Adrenal gland (tissue), 19 donors: ENCODE measurements at regions of chr20 and their contacts with region 1.

Region 1: DNA sequence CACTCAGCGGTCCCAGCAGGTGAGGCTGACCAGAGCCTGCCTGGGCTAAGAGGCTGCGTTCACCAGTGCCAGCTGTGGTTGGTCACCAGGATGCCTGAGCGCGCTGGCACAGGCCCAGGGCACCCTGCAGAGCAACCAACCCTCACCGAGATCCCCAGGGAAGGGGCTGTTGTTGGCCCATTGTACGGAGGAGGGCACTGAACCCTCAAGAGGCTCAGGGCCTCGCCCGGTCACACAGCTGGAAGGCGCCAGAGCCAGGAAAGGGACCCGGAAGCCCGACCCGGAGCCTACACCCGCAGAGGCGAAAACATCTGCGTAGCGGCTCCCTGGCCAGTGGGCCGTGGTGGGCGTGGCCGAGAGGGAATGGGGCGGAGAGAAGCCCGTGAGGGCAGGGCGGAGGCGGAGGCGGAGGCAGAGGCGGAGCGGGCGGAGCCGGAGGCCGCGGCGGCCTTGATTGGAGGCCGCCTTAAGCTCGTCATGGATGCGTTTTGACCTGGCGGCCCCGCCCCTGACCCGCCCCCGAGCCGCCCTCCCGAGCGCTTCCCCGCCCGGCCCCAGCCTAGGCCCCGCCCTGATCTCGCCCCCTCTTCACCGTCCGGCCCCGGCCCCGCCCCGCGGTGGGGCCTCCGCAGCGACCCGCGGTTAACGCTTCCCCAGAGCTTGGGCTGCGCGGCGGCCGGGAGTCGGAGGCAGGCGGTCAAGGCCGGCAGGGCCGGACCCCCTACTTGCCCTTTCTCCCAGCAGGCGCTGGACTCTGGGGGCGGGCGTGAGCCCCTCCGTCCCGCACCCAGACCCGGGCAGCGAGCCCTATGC is 2.2 kb upstream of the MRGBP start:
- DNase-seq: peak; percentile 95 to 98 (median 96)
- H3K4me3 ChIP-seq: peak overlapping the region in 2 of 4 donors; percentile 38 to 95
- H3K27ac ChIP-seq: peak overlapping the region; percentile 77 to 96 (median 89)
- H3K4me1 ChIP-seq: peaks cover 8 to 28% of the 10 kb centered on the region in 2 donors
- H3K27me3 ChIP-seq: no peaks in the 10 kb centered on the region
- CTCF ChIP-seq: no peak
- POLR2A ChIP-seq: peak; percentile 62 to 77

Region 2: DNA sequence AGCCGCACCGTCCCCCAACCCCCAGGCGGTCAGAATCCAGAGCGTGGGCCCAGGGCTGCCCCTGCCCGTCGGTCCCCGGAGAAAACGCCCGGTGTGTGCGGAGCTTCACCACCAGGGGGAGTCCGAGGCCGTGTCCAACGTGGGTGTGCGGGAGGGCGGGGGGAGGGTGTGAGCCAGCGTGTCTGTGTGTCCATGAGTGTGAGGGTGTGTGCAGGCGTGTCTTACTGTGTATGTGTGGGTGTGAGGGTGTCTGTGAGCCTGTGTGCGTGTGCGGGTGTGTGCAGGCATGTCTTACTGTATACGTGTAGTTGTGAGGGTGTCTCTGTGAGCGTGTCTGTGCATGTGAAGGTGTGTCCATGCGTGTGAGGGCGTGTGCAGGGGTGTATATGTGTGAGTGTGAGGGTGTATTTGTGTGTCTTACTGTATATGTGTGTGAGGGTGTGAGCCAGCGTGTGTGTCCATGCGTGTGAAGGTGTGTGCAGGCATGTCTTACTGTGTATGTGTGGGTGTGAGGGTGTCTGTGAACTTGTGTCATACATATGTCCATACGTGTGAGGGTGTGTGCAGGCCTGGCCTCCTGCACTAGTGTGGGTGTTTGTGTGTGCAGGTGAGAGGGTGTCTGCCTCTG is 293.8 kb before region 1 on chr20:
- intact Hi-C with region 1: loop called in 1 of 2 experiments (anchors 10 kb)
- DNase-seq: peak; percentile 73 to 84 (median 80)
- H3K4me3 ChIP-seq: no peak overlapping the region
- H3K27ac ChIP-seq: no peak overlapping the region
- H3K4me1 ChIP-seq: peaks cover 0 to 14% of the 10 kb centered on the region in 2 donors
- H3K27me3 ChIP-seq: no peaks in the 10 kb centered on the region
- CTCF ChIP-seq: peak; percentile 70 to 93 (median 90)
- POLR2A ChIP-seq: no peak

Region 3: GRCh38 chr20:62662422-62662821 is 131.7 kb before region 1 on chr20:
- intact Hi-C with region 1: loop called (anchors 5 kb)
- DNase-seq: no peak
- H3K4me3 ChIP-seq: no peak overlapping the region
- H3K27ac ChIP-seq: peak overlapping the region in 1 of 5 donors; percentile 49
- H3K4me1 ChIP-seq: peaks cover 0 to 5% of the 10 kb centered on the region in 2 donors
- H3K27me3 ChIP-seq: no peaks in the 10 kb centered on the region
- CTCF ChIP-seq: no peak
- POLR2A ChIP-seq: no peak

Region 4: GRCh38 chr20:62668441-62669027 is 125.6 kb before region 1 on chr20:
- intact Hi-C with region 1: loop called (anchors 5 kb)
- DNase-seq: peak; percentile 76 to 90 (median 82)
- H3K4me3 ChIP-seq: no peak overlapping the region
- H3K27ac ChIP-seq: no peak overlapping the region
- H3K4me1 ChIP-seq: no peaks in the 10 kb centered on the region
- H3K27me3 ChIP-seq: no peaks in the 10 kb centered on the region
- CTCF ChIP-seq: peak; percentile 70 to 95 (median 90)
- POLR2A ChIP-seq: no peak